ENCODE measurements at regions of chr11 and their contacts with region 1.

Region 1: GRCh38 chr11:72430741-72431570 is 3.4 kb downstream of the CLPB start:
- DNase-seq: peak; percentile 74
- H3K4me3 ChIP-seq: peak overlapping the region in 1 of 2 experiments; percentile 36; a peak in 1 of 4 replicates
- H3K27ac ChIP-seq: peak overlapping the region in 1 of 2 experiments; percentile 67; a peak in 2 of 4 replicates
- H3K4me1 ChIP-seq: peaks cover 9 to 44% of the 10 kb centered on the region in 2 experiments; a peak in 2 of 4 replicates
- H3K27me3 ChIP-seq: no peaks in the 10 kb centered on the region
- CTCF ChIP-seq: peak; percentile 91
- EP300 ChIP-seq: no peak
- RAD21 ChIP-seq: peak; percentile 98

Region 2: GRCh38 chr11:72091005-72091691 is 339.8 kb before region 1 on chr11:
- CTCF ChIA-PET with region 1: interaction called, 12 read pairs
- POLR2A ChIA-PET with region 1: no interaction called
- DNase-seq: peak; percentile 78
- H3K4me3 ChIP-seq: no peak overlapping the region; a peak in 1 of 4 replicates
- H3K27ac ChIP-seq: no peak overlapping the region
- H3K4me1 ChIP-seq: peaks cover 0 to 16% of the 10 kb centered on the region in 2 experiments; a peak in 2 of 4 replicates
- H3K27me3 ChIP-seq: no peaks in the 10 kb centered on the region
- CTCF ChIP-seq: peak; percentile 88
- EP300 ChIP-seq: no peak
- RAD21 ChIP-seq: peak; percentile 86

Region 3: DNA sequence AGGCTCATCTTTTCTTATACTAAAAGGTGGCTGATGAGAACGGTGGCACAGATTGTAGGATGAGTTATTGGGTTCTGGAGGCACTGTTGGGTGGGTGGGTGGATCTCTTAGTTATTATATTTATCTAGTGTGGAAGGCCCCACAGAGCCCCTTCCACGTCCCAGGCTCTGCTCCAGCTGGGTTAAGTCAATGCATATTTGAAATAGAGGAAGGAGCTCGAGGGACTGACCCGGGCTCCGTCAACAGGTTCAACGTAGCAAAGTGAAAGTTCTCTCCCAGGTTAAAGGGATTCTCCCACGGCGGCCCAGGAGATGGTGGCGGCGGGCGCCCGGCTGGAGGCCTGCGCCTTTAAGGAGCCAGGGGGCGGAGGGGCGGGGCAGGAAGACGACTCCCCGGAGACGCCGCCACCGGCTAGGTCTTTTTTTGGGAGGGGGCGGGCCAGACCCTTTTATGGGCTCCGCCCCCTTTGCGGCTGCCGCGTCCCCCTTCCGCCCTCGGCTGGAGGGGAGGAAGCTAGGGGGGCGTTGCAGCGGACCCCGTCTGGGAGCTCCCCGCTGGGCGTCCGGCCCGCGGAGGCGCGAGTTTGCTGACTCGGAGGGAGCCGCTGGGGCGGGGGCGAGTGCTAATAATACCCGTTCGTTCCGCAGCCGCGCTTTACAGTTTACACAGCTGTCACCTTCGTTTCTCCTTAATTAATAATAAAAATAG is 207.9 kb before region 1 on chr11:
- CTCF ChIA-PET with region 1: interaction called, 73 read pairs
- POLR2A ChIA-PET with region 1: interaction called, 8 read pairs
- DNase-seq: peak; percentile 92
- H3K4me3 ChIP-seq: peak overlapping the region; percentile 96 to 100
- H3K27ac ChIP-seq: peak overlapping the region; percentile 90 to 91
- H3K4me1 ChIP-seq: peaks cover 5 to 31% of the 10 kb centered on the region in 2 experiments; a peak in 3 of 4 replicates
- H3K27me3 ChIP-seq: no peaks in the 10 kb centered on the region
- CTCF ChIP-seq: no peak
- EP300 ChIP-seq: peak in 1 of 2 experiments; percentile 41; a peak in 1 of 4 replicates
- RAD21 ChIP-seq: no peak

Region 4: DNA sequence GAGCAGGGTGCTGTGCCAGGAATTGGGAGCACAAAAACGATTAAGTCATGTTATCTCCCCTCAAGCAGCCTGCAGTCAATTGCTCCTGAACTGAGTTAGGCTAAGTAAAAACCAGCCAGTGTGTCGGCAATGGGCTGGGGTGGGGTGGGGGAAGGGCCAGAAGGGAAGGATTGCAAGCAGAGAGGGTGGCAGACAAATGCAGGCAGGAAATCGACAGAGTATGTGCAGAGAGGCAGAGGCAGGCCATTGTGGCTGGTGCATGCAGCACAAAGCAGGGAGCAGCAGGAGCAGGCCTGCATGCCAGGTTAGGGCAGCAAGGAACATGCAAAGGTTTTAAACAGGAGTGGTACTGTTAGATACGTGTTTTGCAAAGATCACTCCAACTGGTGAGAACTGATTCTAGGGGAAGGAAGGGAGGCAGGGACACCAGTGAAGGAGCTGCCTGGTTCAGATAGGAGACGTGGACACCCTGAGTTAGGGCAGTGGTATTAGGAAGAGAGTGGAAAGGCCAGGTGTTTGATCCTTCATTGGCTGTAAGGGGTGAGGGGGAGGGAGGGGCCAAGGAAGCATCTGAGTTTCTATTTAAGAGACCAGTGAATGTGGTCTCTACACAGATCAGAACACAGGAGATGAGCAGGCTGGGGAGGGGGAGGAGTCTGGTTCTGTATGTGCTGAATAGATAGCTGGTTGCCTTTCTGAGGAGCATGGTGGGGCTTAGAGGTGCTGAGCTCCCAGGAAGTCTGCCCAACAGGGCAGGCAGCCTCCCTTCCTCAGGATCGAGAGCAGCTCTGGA is 116.2 kb before region 1 on chr11:
- CTCF ChIA-PET with region 1: interaction called, 14 read pairs
- POLR2A ChIA-PET with region 1: no interaction called
- DNase-seq: no peak
- H3K4me3 ChIP-seq: no peak overlapping the region
- H3K27ac ChIP-seq: peak overlapping the region in 1 of 2 experiments; percentile 100; a peak in 2 of 4 replicates
- H3K4me1 ChIP-seq: peaks cover 0 to 61% of the 10 kb centered on the region in 2 experiments; a peak in 1 of 4 replicates
- H3K27me3 ChIP-seq: no peaks in the 10 kb centered on the region
- CTCF ChIP-seq: no peak
- EP300 ChIP-seq: no peak
- RAD21 ChIP-seq: no peak

Region 5: GRCh38 chr11:72373163-72373562 is 57.8 kb before region 1 on chr11:
- CTCF ChIA-PET with region 1: interaction called, 17 read pairs
- POLR2A ChIA-PET with region 1: no interaction called
- DNase-seq: no peak
- H3K4me3 ChIP-seq: no peak overlapping the region
- H3K27ac ChIP-seq: peak overlapping the region in 1 of 2 experiments; percentile 99; a peak in 2 of 4 replicates
- H3K4me1 ChIP-seq: peaks cover 20 to 44% of the 10 kb centered on the region in 2 experiments
- H3K27me3 ChIP-seq: no peaks in the 10 kb centered on the region
- CTCF ChIP-seq: no peak
- EP300 ChIP-seq: 0 out of 4 replicates have a peak, but pooled peaks of 1 of the 2 experiments have one; percentile 13
- RAD21 ChIP-seq: no peak

Region 6: GRCh38 chr11:72471005-72471898 is 40.3 kb after region 1 on chr11:
- CTCF ChIA-PET with region 1: interaction called, 11 read pairs
- POLR2A ChIA-PET with region 1: no interaction called
- DNase-seq: peak; percentile 76
- H3K4me3 ChIP-seq: peak overlapping the region in 1 of 2 experiments; percentile 17; a peak in 1 of 4 replicates
- H3K27ac ChIP-seq: no peak overlapping the region
- H3K4me1 ChIP-seq: no peaks in the 10 kb centered on the region; a peak in 1 of 4 replicates
- H3K27me3 ChIP-seq: peaks cover 14% of the 10 kb centered on the region
- CTCF ChIP-seq: peak; percentile 81
- EP300 ChIP-seq: no peak
- RAD21 ChIP-seq: peak; percentile 87

Region 7: DNA sequence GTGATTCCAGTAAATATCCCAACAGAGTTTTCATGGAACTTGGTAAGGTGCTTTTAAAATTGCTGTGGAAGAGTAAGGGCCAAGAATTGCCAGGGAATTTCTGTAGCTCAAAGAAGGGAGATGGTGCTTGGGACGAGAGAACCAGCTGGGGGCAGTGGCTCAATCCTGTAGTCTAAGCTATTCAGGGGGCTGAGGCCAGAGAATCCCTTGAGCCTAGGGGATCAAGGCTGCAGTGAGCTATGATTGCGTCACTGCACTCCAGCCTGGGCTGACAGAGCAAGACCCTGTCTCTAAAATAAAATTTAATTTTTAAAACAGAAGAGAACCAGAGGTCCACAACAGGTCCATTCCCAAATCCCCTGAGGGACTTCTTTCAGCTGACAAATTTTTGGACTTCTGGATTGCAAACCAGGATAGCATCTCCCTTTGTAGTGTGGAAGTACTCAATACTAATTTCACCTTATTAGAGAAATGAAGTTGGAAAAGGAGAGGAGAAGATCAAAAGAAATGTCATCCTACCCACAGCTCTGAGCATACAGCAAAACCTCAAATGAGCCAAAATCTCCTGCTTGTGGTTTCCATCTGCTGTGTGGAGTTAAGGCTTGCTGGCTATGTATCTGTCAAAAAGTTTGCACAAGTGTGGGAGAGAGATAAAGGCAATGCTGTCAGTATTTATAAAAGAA is 62.6 kb after region 1 on chr11:
- CTCF ChIA-PET with region 1: no interaction called
- POLR2A ChIA-PET with region 1: no interaction called
- DNase-seq: no peak
- H3K4me3 ChIP-seq: no peak overlapping the region
- H3K27ac ChIP-seq: no peak overlapping the region
- H3K4me1 ChIP-seq: no peaks in the 10 kb centered on the region; a peak in 1 of 4 replicates
- H3K27me3 ChIP-seq: peaks cover 5% of the 10 kb centered on the region; the same call in 1 of the 2 replicates
- CTCF ChIP-seq: no peak
- EP300 ChIP-seq: no peak
- RAD21 ChIP-seq: no peak

Measured in SK-N-SH (cell line).